ENCODE measurements at regions of chr15 and their contacts with region 1.

Region 1: DNA sequence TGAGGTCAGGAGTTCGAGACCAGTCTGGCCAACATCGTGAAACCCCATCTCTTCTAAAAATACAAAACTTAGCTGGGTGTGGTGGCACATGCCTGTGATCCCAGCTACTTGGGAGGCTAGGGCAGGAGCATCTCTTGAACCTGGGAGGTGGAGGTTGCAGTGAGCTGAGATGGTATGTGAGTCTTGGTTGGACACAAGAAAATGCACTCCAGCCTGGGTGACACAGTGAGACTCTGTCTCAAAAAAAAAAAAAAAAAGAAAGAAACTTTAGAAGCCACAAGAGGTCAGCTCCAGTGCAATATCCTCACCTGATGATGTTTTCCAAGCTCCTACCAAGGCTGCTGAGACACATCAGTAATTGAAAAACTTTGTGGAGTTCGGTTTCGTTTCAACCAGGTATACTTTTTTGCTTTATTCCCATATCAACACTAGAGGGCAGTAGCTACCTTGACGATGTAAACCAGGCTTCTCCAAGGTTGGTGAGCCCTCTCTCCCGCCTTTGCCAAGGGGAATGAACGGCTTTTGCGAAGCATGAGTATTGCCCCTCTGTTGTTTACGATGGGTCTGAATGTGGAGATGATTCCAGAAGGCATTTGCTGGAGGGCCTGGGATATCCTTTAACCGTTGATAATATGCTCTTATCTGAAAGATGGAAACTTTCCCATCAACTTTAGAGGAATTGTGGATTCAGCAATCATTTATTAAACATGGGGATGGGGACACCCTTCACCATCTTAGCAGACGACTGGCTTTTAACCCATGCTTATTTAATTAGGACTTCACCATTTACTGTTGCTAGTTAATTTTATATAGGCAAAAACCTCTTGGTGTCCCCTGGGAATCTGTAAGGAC is 202.8 kb downstream of the SV2B start:
- DNase-seq: peak in 6 of 9 donors; percentile 32 to 64 (median 55)
- ATAC-seq: peak; percentile 79
- H3K4me3 ChIP-seq: no peak overlapping the region
- H3K4me3 Mint-ChIP-seq: peak overlapping the region in 7 of 10 donors; percentile 20 to 61 (median 57)
- H3K27ac ChIP-seq: no peak overlapping the region
- H3K27ac Mint-ChIP-seq: peak overlapping the region in 3 of 9 donors; percentile 15 to 63 (median 34)
- H3K4me1 ChIP-seq: peaks cover 16 to 27% of the 10 kb centered on the region in 2 donors
- H3K4me1 Mint-ChIP-seq: peaks cover 19 to 53% (median 45%) of the 10 kb centered on the region in 7 donors
- H3K27me3 ChIP-seq: no peaks in the 10 kb centered on the region
- H3K27me3 Mint-ChIP-seq: peaks cover 0 to 70% (median 0%) of the 10 kb centered on the region in 5 donors

Region 2: GRCh38 chr15:91522663-91523332 is 220.0 kb after region 1 on chr15:
- CTCF ChIA-PET with region 1: interaction called, 17 read pairs
- POLR2A ChIA-PET with region 1: no interaction called
- intact Hi-C with region 1: loop called (anchors 1 kb)
- DNase-seq: peak in 7 of 9 donors; percentile 12 to 54 (median 33)
- ATAC-seq: peak; percentile 41
- H3K4me3 ChIP-seq: no peak overlapping the region
- H3K4me3 Mint-ChIP-seq: peak overlapping the region in 1 of 10 donors; percentile 15
- H3K27ac ChIP-seq: no peak overlapping the region
- H3K27ac Mint-ChIP-seq: peak overlapping the region in 4 of 9 donors; percentile 22 to 75 (median 66)
- H3K4me1 ChIP-seq: peaks cover 9 to 12% of the 10 kb centered on the region in 2 donors
- H3K4me1 Mint-ChIP-seq: peaks cover 9 to 56% (median 18%) of the 10 kb centered on the region in 7 donors
- H3K27me3 ChIP-seq: no peaks in the 10 kb centered on the region
- H3K27me3 Mint-ChIP-seq: peaks cover 0 to 13% (median 0%) of the 10 kb centered on the region in 5 donors

Region 3: DNA sequence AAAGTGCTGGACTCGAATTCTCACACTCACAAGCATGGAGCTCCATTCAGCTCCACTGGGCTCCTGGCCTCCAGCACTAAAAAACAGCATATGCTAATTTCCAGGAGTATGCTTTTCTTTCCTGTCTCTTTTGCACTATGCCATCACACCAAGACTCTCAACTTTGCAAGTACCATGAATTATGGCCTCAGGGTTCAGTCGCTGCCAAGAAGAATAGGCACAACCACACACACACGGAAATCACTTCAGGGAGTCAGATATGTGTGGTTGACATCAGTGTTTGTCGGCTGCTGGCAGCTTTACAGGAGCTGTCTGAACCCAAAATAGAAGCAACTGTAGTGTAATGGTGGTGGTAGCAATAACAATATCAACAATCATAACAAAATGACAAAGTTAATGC is 245.7 kb after region 1 on chr15:
- CTCF ChIA-PET with region 1: no interaction called
- POLR2A ChIA-PET with region 1: no interaction called
- intact Hi-C with region 1: no loop called
- DNase-seq: no peak
- ATAC-seq: no peak
- H3K4me3 ChIP-seq: no peak overlapping the region
- H3K4me3 Mint-ChIP-seq: no peak overlapping the region
- H3K27ac ChIP-seq: no peak overlapping the region
- H3K27ac Mint-ChIP-seq: no peak overlapping the region
- H3K4me1 ChIP-seq: no peaks in the 10 kb centered on the region
- H3K4me1 Mint-ChIP-seq: no peaks in the 10 kb centered on the region
- H3K27me3 ChIP-seq: no peaks in the 10 kb centered on the region
- H3K27me3 Mint-ChIP-seq: peaks cover 0 to 7% (median 0%) of the 10 kb centered on the region in 5 donors

Region 4: DNA sequence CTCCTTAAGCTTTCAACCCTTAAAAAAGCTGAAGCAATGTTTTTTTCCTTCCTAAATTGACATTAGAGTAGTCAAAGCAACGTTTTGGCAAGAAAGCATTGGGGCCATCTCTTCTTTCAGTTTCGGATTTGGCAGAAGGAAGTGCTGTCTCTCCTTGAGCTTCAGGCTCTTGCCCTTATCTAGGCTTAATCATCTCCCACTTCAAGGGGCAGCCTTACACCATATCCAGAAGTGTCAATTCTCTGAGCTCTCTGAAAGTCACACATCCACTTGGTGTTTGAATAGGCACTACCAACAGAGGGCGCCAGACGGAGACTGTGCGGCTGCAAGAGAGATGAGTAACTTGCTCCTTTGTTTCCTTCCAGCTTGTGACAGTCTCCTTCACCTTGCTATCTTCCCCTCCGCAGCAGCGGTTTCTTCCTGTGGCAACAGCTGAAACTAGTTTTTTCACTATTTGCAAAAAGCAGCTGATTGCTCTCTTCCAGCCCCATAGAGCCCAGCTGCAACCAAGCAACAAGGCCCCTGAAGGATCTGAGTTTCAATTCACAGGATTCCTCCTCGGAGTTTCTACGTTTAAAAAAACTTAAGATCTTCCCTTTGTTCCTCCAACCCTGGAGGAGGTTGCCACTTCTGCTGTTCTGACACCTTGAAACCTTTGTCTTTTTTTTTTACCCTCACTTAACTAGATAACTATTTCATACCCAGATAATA is 403.7 kb after region 1 on chr15:
- CTCF ChIA-PET with region 1: interaction called, 22 read pairs
- POLR2A ChIA-PET with region 1: no interaction called
- intact Hi-C with region 1: loop called (anchors 1 kb)
- DNase-seq: peak; percentile 58 to 84 (median 77)
- ATAC-seq: peak; percentile 98
- H3K4me3 ChIP-seq: no peak overlapping the region
- H3K4me3 Mint-ChIP-seq: peak overlapping the region in 9 of 10 donors; percentile 48 to 77 (median 62)
- H3K27ac ChIP-seq: no peak overlapping the region
- H3K27ac Mint-ChIP-seq: peak overlapping the region in 7 of 9 donors; percentile 37 to 88 (median 75)
- H3K4me1 ChIP-seq: peaks cover 10 to 13% of the 10 kb centered on the region in 2 donors
- H3K4me1 Mint-ChIP-seq: peaks cover 11 to 24% (median 20%) of the 10 kb centered on the region in 7 donors
- H3K27me3 ChIP-seq: no peaks in the 10 kb centered on the region
- H3K27me3 Mint-ChIP-seq: peaks cover 0 to 27% (median 4%) of the 10 kb centered on the region in 5 donors

Region 5: GRCh38 chr15:92077353-92078085 is 774.7 kb after region 1 on chr15:
- CTCF ChIA-PET with region 1: interaction called, 10 read pairs
- POLR2A ChIA-PET with region 1: no interaction called
- intact Hi-C with region 1: loop called (anchors 1 to 2 kb)
- DNase-seq: peak; percentile 11 to 58 (median 37)
- ATAC-seq: peak; percentile 71
- H3K4me3 ChIP-seq: no peak overlapping the region
- H3K4me3 Mint-ChIP-seq: no peak overlapping the region
- H3K27ac ChIP-seq: no peak overlapping the region
- H3K27ac Mint-ChIP-seq: no peak overlapping the region
- H3K4me1 ChIP-seq: peaks cover 3 to 4% of the 10 kb centered on the region in 2 donors
- H3K4me1 Mint-ChIP-seq: peaks cover 4 to 42% (median 28%) of the 10 kb centered on the region in 7 donors
- H3K27me3 ChIP-seq: no peaks in the 10 kb centered on the region
- H3K27me3 Mint-ChIP-seq: no peaks in the 10 kb centered on the region

Measured in naive thymus-derived CD4-positive, alpha-beta T cell (primary cell).